ENCODE measurements at regions of chr15 and their contacts with region 1.

Region 1: DNA sequence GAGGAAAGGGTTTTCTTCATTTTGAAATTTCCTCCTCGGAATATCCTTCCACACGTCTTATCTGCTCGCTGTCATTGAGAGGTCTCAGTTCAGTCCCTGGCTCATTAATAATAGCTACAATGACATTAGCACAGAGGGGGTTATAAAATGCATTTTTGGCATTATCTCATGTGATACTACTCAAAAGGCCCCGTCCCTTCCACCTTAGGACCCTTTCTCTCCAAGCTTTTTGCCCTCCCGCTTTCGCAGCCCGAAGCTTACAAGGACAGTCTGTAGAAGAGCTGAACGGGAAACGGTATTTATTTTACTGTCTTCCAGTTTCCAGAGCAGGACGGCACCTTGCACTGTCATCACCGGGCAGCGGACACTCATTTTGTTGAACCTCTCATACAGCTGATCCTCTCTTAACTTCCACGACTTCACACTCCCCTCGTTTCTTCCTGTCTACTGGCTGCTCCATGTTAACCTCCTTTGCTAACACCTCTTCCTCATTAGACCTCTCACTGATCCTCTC is 5.6 kb upstream of the PLEKHO2 start:
- DNase-seq: no peak
- ATAC-seq: peak; percentile 4
- H3K4me3 Mint-ChIP-seq: peak overlapping the region; percentile 56
- H3K27ac Mint-ChIP-seq: peak overlapping the region; percentile 30
- H3K4me1 Mint-ChIP-seq: peaks cover 43% of the 10 kb centered on the region
- H3K27me3 Mint-ChIP-seq: no peaks in the 10 kb centered on the region

Region 2: GRCh38 chr15:64905119-64905831 is 69.2 kb after region 1 on chr15:
- CTCF ChIA-PET with region 1: interaction called, 14 read pairs
- POLR2A ChIA-PET with region 1: interaction called, 5 read pairs
- intact Hi-C with region 1: no loop called
- DNase-seq: peak; percentile 91
- ATAC-seq: peak; percentile 87
- H3K4me3 Mint-ChIP-seq: peak overlapping the region; percentile 67
- H3K27ac Mint-ChIP-seq: peak overlapping the region; percentile 87
- H3K4me1 Mint-ChIP-seq: peaks cover 34% of the 10 kb centered on the region
- H3K27me3 Mint-ChIP-seq: peaks cover 6% of the 10 kb centered on the region

Region 3: GRCh38 chr15:65133548-65134200 is 297.6 kb after region 1 on chr15 and contains the start of gene PDCD7:
- CTCF ChIA-PET with region 1: no interaction called
- POLR2A ChIA-PET with region 1: no interaction called
- intact Hi-C with region 1: loop called in 1 of 2 experiments (anchors 2 kb)
- DNase-seq: peak; percentile 91
- ATAC-seq: peak; percentile 96
- H3K4me3 Mint-ChIP-seq: peak within 1 kb of the TSS; percentile 85
- H3K27ac Mint-ChIP-seq: peak within 1 kb of the TSS; percentile 93
- H3K4me1 Mint-ChIP-seq: peaks cover 26% of the 10 kb centered on the region
- H3K27me3 Mint-ChIP-seq: no peaks in the 10 kb centered on the region
- total RNA-seq, gene PDCD7: 16.6 to 24.8 TPM

Measured in activated CD4-positive, alpha-beta T cell treated with anti-CD3 and anti-CD28 coated beads for 36 hours (primary cell).